Adrenal gland (tissue), 19 donors: ENCODE measurements at regions of chr12 and their contacts with region 1.

Region 1: DNA sequence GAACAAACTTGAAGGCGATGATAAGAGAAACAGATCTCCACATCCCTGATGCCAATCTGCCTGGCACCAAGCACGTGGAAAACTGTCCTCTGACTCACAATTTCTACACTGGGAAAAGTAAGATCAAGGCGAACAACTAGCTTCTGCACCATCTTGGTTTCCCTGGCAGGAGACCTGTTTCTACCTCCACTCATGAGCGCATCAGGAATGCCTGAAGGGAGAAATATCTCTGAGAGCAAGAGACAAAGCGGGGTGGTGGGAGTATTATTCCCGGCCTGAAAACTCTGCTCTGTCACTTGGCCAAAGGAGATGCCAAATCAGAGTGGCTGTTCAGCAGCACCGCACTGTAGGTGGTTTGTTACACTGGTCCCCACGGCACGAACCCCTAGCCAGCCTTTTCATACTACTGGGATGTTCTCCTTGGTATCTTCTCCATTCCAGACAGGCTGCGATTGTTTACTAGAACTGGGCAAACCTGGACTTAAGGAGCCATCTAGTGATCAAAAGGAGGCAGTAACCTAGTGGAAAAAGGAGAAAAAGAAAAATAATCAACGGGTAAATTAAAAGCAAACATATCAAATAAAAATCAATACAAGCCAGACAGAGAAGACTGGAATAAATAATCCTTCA is 59.0 kb upstream of the TMTC2 start:
- DNase-seq: peak in 1 of 7 donors; percentile 2
- H3K4me3 ChIP-seq: no peak overlapping the region
- H3K27ac ChIP-seq: no peak overlapping the region
- H3K4me1 ChIP-seq: no peaks in the 10 kb centered on the region
- H3K27me3 ChIP-seq: no peaks in the 10 kb centered on the region
- CTCF ChIP-seq: peak in 5 of 6 experiments; percentile 10 to 52 (median 44)
- POLR2A ChIP-seq: no peak

Region 2: DNA sequence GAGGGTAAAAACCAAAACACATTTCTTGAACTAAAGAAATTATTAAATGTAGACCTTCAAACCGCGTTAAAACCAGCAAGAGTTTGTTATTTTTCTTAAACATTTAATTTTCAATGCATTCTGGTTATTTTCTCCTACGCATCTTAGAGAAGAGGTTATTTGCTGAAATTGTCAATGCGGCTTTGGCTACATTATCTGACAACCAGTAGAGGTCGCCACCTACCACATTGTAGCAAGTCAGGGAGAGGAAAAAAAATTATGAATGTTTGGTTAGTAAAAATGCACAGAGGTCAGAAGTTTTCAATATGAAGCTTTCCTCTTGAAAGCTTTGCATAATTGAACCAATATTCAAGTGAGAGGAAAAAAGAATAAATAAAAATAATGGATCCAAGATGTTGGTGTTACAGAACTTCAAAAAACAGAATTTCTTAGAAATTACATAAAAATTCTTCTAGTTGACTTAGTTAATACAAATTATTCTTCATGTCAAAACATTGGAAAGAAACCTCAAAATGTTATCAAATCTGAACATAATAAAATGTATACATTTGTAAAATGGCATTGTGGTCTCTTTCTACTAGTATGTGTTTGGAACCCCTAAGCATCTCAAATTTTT is 100.4 kb before region 1 on chr12:
- intact Hi-C with region 1: loop called in 1 of 2 experiments (anchors 10 kb)
- DNase-seq: peak; percentile 28 to 64 (median 32)
- H3K4me3 ChIP-seq: no peak overlapping the region
- H3K27ac ChIP-seq: no peak overlapping the region
- H3K4me1 ChIP-seq: no peaks in the 10 kb centered on the region
- H3K27me3 ChIP-seq: no peaks in the 10 kb centered on the region
- CTCF ChIP-seq: peak; percentile 68 to 88 (median 80)
- POLR2A ChIP-seq: no peak